PC-3 (cell line): ENCODE measurements at regions of chr2 and their contacts with region 1.

Region 1: GRCh38 chr2:234550511-234551107 is 53.7 kb upstream of the ARL4C start:
- DNase-seq: peak; percentile 79
- ATAC-seq: peak; percentile 97
- H3K4me3 ChIP-seq: no peak overlapping the region
- H3K27ac ChIP-seq: no peak overlapping the region
- H3K4me1 ChIP-seq: peaks cover 4% of the 10 kb centered on the region; the same call in 1 of the 2 replicates
- H3K27me3 ChIP-seq: no peaks in the 10 kb centered on the region
- CTCF ChIP-seq: peak; percentile 94

Region 2: DNA sequence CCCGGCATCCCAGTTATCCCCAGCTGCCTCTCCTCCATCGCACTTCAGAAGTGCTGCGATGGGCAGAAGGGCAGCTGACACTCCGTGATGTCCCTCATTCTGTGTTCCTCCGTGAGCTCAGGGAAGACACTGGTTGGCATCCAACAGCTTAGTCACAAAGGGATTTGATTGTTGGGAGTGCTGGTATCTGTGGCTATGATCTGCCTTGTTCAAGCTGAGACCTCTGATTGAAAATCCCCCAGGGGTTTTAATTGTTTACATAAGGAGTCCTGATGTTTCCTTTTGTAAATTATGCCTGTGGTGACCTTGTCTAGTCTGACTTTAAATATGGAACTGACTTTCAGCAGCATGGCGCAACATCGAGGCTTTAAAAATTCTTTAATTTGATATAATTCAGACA is 1261.9 kb before region 1 on chr2:
- CTCF ChIA-PET with region 1: interaction called, 13 read pairs
- POLR2A ChIA-PET with region 1: no interaction called
- intact Hi-C with region 1: no loop called
- DNase-seq: no peak
- ATAC-seq: peak; percentile 42; the same call in 1 of the 2 replicates
- H3K4me3 ChIP-seq: no peak overlapping the region
- H3K27ac ChIP-seq: no peak overlapping the region
- H3K4me1 ChIP-seq: no peaks in the 10 kb centered on the region
- H3K27me3 ChIP-seq: no peaks in the 10 kb centered on the region
- CTCF ChIP-seq: no peak

Region 3: GRCh38 chr2:234679741-234680687 is 129.4 kb after region 1 on chr2:
- CTCF ChIA-PET with region 1: interaction called, 3 read pairs
- POLR2A ChIA-PET with region 1: no interaction called
- intact Hi-C with region 1: loop called (anchors 10 kb)
- DNase-seq: peak; percentile 89
- ATAC-seq: peak; percentile 83
- H3K4me3 ChIP-seq: peak overlapping the region; percentile 54; the same call in 1 of the 2 replicates
- H3K27ac ChIP-seq: peak overlapping the region; percentile 89
- H3K4me1 ChIP-seq: peaks cover 58% of the 10 kb centered on the region
- H3K27me3 ChIP-seq: no peaks in the 10 kb centered on the region
- CTCF ChIP-seq: no peak

Region 4: DNA sequence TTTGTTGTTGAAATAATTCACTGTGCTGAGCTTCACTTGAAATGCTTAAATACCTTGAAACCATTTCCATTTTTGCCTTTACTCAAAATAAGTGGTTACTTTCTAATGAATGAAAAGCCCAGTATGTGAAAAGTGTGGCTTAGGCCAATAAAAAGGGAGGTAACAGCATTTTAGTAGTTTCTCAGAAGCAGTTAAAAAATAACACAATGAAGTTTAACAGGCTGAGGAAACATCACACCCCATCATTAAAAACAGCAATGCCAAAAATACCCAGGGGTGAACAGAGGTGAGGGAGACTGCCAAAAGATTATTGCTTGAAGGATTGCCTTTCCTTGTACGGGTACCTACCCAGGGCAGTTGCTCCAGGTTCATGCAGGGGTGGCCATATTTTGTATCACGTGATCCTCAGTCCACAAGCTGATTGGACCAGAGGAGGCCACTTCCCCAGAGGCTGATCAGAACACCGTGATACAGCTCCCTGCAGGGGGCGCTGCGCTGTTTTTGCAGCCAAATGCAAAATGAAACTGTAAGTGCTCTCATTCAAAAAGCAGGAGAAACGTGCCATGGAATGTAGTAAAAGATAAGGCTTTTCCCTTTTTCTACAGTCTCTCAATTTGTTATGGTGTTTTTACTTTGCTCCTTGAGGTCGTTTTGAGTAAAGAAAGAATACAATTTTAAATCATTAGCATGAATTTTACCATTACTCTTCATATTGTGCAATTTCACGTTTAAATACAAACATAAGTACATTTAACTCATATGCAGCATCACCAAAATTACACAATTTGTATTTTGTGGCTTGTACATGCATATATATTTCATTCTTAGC is 331.0 kb after region 1 on chr2:
- CTCF ChIA-PET with region 1: no interaction called
- POLR2A ChIA-PET with region 1: no interaction called
- intact Hi-C with region 1: loop called (anchors 2 kb)
- DNase-seq: peak; percentile 93
- ATAC-seq: peak; percentile 94
- H3K4me3 ChIP-seq: peak overlapping the region; percentile 62
- H3K27ac ChIP-seq: peak overlapping the region; percentile 67
- H3K4me1 ChIP-seq: peaks cover 33% of the 10 kb centered on the region
- H3K27me3 ChIP-seq: no peaks in the 10 kb centered on the region
- CTCF ChIP-seq: peak; percentile 94

Region 5: GRCh38 chr2:235106874-235107639 is 556.4 kb after region 1 on chr2:
- CTCF ChIA-PET with region 1: no interaction called
- POLR2A ChIA-PET with region 1: no interaction called
- intact Hi-C with region 1: loop called (anchors 1 kb)
- DNase-seq: peak; percentile 81
- ATAC-seq: peak; percentile 93
- H3K4me3 ChIP-seq: no peak overlapping the region
- H3K27ac ChIP-seq: no peak overlapping the region
- H3K4me1 ChIP-seq: no peaks in the 10 kb centered on the region
- H3K27me3 ChIP-seq: no peaks in the 10 kb centered on the region
- CTCF ChIP-seq: peak; percentile 87